Adrenal gland (tissue), 19 donors: ENCODE measurements at regions of chr11 and their contacts with region 1.

Region 1: DNA sequence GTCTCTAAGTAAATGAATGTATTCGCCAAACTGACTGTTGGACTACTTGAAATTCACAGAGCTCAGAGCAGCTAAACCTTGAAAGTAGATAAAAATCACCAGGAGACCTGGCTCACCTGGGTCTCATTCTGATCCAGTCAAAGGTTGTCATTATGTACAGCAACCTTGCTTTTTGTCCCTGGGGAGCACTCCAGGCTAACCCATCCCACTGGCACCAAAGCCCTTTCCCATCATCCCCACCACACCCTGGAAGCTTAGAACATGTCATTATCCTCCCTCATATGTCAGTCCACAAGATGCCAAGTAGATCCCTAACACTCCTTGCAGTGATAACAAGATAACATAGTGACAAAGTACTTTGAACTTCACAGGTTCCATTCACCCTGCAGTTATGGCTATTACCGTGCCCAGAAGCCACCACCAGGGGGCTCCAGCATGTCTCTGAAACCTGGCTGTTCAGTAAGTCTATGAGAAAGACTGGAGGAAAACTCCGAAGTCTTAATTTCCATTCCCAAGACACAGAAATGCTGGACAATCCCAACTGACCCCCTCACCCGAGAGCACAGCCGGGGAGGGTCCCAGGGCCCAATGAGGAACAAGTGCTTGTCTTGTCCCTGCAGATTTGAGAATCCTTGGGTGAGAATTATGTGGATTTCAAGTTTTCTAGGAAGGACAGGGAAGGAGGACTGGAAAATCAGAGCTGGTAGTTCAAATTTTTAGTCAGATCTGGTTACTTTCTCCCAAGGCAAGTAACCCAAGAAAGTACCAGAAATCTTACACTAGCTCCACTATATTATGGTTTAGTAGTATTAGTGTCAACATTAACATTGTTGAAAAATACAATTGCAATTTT is 43.0 kb upstream of the USP47 start:
- DNase-seq: peak; percentile 63 to 95 (median 83)
- H3K4me3 ChIP-seq: no peak overlapping the region
- H3K27ac ChIP-seq: no peak overlapping the region
- H3K4me1 ChIP-seq: no peaks in the 10 kb centered on the region
- H3K27me3 ChIP-seq: peaks cover 11% of the 10 kb centered on the region
- CTCF ChIP-seq: peak; percentile 62 to 91 (median 88)
- POLR2A ChIP-seq: no peak

Region 2: DNA sequence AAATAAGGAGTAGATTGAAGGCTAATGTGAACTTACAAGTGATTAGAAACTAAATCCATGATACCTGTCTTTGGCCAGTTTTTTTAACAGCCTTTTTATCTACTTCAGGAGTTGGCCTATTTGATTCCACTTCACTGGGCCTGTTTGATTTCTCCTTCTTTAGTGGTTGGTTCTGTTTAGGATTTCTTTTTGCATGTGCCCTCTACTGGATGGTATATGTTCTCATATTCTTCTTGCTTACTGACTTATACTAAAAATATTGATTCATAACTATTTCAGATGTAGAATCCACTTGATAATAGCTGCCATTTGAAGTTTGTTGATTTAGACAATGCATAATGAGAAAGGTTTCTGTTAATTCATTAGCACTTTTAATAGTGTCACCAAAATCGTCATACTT is 96.9 kb after region 1 on chr11:
- intact Hi-C with region 1: loop called in 1 of 2 experiments (anchors 10 kb)
- DNase-seq: no peak
- H3K4me3 ChIP-seq: no peak overlapping the region
- H3K27ac ChIP-seq: no peak overlapping the region
- H3K4me1 ChIP-seq: no peaks in the 10 kb centered on the region
- H3K27me3 ChIP-seq: no peaks in the 10 kb centered on the region
- CTCF ChIP-seq: peak in 1 of 6 experiments; percentile 9
- POLR2A ChIP-seq: no peak

Region 3: DNA sequence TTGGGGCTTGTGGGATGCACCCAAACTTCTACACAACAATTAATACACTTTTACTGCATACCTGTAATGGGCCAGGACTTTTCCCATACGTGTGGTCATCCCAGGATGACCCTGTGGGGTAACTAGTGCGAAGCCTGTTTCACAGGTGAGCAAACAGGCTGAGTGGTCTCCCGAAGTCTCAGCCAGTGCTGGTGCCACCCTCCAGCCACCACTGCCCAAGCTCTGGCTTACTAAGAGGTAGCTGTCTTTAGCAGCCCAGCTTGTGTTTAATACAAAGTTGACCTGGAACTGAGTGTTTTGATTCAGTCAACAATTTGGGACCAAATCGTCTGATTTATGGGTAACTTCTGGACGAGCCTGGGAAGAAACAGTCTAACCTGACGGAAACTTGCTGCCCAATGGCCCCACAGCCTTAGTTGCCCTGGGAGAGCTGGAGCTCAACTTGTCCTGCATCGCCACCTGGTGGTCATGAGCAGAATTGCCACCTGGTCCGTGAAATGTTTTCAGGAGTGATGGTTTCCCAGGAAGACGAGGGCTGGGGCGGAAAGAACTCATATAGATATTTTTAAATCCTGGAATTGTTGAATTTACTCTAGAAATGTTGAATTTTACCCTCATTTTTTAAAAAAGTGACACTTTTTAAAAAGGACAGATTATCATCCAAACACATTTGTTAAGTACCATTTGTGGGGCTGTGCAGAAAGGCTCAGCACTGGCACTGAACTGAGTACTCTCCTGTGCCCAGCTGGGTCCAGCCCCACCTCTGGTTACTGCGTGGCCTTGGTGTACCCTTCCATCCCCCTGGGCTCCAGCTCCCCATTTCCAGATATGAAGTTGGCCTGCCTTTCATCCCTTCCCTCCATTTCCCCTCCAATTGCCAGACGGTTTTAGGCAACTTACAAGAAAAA is 483.0 kb after region 1 on chr11:
- intact Hi-C with region 1: loop called in 1 of 2 experiments (anchors 5 kb)
- DNase-seq: peak; percentile 78 to 96 (median 89)
- H3K4me3 ChIP-seq: no peak overlapping the region
- H3K27ac ChIP-seq: no peak overlapping the region
- H3K4me1 ChIP-seq: no peaks in the 10 kb centered on the region
- H3K27me3 ChIP-seq: no peaks in the 10 kb centered on the region
- CTCF ChIP-seq: peak; percentile 95 to 99 (median 98)
- POLR2A ChIP-seq: no peak